CD8-positive, alpha-beta T cell (primary cell): ENCODE measurements at regions of chr6 and their contacts with region 1.

Region 1: DNA sequence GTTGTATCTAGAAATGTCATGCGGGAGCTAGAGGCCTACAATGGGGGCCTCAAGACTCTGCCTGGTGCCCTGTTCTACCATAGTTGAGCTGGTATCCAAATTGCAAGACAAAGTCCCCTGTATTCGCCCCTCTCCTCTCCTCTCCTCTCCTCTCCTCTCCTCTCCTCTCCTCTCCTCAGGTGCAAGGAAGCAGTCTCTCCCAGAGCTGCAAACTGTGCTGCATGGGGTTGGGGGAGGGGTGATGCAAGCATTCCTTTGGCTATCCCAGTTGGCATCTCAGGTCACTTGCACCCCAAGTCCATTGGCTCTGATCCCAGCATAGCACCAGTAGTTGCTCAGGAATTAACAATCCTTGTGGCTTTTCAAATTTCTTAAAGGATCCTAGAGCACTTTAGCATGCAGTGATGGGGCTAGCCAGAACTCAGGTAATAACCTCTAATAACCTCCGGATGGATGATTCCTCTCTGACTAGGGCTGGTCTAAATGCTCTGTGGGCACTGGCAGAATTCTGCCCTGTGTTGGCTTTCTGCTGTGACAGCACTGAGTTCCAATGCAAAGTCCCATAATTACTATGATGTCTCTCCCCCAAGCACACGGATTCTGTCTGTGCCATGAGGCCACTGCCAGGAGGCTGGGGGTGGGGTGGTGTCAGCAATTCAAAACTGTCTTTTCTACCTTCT is 35.3 kb downstream of the TAF11 start:
- DNase-seq: no peak
- ATAC-seq: no peak
- H3K4me3 ChIP-seq: no peak overlapping the region
- H3K4me3 Mint-ChIP-seq: no peak overlapping the region
- H3K27ac ChIP-seq: no peak overlapping the region
- H3K27ac Mint-ChIP-seq: no peak overlapping the region
- H3K4me1 ChIP-seq: no peaks in the 10 kb centered on the region
- H3K4me1 Mint-ChIP-seq: no peaks in the 10 kb centered on the region
- H3K27me3 ChIP-seq: no peaks in the 10 kb centered on the region
- H3K27me3 Mint-ChIP-seq: no peaks in the 10 kb centered on the region
- CTCF ChIP-seq: no peak

Region 2: DNA sequence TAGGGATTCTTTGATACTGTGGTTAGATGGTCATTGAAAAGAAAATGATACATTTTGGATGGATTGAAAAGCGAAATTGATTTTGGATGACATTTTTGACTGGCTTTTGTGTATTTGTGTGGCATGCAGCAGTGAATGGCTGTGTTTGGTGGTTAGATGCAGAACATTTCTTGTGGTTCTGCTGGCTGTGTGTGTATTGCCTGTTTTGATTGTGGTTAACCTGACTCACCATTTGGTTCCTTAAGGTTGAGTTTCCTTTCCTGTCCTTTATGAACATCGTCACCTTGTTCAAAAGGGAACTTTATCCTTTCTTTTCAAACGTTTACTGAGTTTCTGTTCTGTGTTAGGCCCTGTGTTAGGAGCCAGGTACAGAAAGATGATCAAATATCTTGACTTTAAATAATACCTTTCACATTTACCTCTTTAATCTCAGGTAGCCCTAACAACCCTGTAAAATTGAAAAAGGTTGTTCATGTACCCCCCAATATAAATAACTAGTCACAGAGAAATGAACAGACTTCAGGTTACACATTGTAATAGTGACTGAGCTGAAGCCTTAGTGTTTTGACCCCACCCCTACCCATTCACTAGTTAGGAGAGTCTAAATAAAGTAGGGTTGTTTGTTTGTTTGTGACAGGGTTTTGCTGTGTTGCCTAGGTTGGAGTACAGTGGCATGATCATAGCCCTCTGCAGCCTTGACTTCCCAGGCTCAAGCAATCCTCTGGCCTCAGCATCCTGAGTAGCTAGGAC is 60.3 kb after region 1 on chr6:
- CTCF ChIA-PET with region 1: no interaction called
- POLR2A ChIA-PET with region 1: no interaction called
- intact Hi-C with region 1: loop called in 1 of 2 experiments (anchors 2 kb)
- DNase-seq: peak in 7 of 9 experiments; percentile 10 to 73 (median 38)
- ATAC-seq: peak; percentile 89
- H3K4me3 ChIP-seq: peak overlapping the region in 1 of 2 experiments; percentile 4
- H3K4me3 Mint-ChIP-seq: peak overlapping the region; percentile 55
- H3K27ac ChIP-seq: no peak overlapping the region
- H3K27ac Mint-ChIP-seq: peak overlapping the region; percentile 27
- H3K4me1 ChIP-seq: peaks cover 16% of the 10 kb centered on the region
- H3K4me1 Mint-ChIP-seq: peaks cover 36% of the 10 kb centered on the region
- H3K27me3 ChIP-seq: no peaks in the 10 kb centered on the region
- H3K27me3 Mint-ChIP-seq: no peaks in the 10 kb centered on the region
- CTCF ChIP-seq: no peak